Dendritic cell treated with granulocyte-macrophage colony-stimulating factor and Interleukin-4, amounts not matched to agents 40 ng/mL and 50 ng/mL, for 4 days (primary cell): ENCODE measurements at regions of chr7 and their contacts with region 1.

Region 1: GRCh38 chr7:139645572-139646523 is 122.4 kb downstream of the CLEC2L start:
- H3K4me3 Mint-ChIP-seq: no peak overlapping the region
- H3K27ac Mint-ChIP-seq: no peak overlapping the region
- H3K4me1 Mint-ChIP-seq: peaks cover 52% of the 10 kb centered on the region
- H3K27me3 Mint-ChIP-seq: peaks cover 3% of the 10 kb centered on the region

Region 2: DNA sequence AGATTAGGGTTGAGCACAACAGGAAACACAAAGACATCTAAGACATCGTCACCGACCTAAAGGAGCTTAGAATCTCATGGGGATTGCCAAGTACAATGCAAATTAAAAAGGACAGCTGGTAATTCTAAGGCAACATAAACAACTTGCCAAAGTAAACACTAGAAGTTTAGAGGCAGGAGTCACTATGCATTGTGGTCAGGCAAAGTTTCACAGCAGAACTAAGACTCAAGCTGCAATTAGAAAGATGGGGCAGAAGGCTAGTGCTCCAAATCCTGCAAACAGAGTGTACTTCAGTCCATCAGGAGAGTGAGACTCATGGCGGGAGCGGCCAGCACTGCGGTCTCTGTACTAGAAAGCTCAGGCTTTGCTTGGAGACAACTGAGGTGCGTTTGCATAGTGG is 79.2 kb after region 1 on chr7:
- intact Hi-C with region 1: loop called (anchors 10 kb)
- H3K4me3 Mint-ChIP-seq: no peak overlapping the region
- H3K27ac Mint-ChIP-seq: no peak overlapping the region
- H3K4me1 Mint-ChIP-seq: peaks cover 34% of the 10 kb centered on the region
- H3K27me3 Mint-ChIP-seq: no peaks in the 10 kb centered on the region

Region 3: GRCh38 chr7:139829025-139829774 is 183.4 kb after region 1 on chr7 and contains the start of gene TBXAS1:
- intact Hi-C with region 1: loop called (anchors 2 kb)
- H3K4me3 Mint-ChIP-seq: peak within 1 kb of the TSS; percentile 87
- H3K27ac Mint-ChIP-seq: peak within 1 kb of the TSS; percentile 95
- H3K4me1 Mint-ChIP-seq: peaks cover 52% of the 10 kb centered on the region
- H3K27me3 Mint-ChIP-seq: peaks cover 8% of the 10 kb centered on the region

Region 4: DNA sequence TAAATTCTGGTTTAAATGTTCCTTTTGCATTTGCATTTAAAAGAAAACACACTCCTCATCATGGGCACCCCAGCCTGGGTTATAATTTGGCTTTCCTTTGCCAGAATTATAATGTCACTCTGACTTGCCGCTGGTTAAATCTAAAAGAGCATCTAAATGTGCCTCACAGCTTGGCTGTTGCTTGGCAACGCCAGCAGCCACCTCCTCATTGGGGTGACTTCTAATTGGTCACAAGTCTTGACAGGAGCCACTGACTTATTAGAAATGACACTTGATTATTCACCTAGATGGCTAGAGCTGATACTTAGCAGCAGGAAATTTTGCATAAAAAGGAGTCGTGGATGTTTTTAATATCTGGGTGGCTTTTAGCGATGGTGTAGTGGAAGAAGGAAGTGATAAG is 297.6 kb after region 1 on chr7:
- intact Hi-C with region 1: loop called (anchors 10 kb)
- H3K4me3 Mint-ChIP-seq: no peak overlapping the region
- H3K27ac Mint-ChIP-seq: no peak overlapping the region
- H3K4me1 Mint-ChIP-seq: peaks cover 36% of the 10 kb centered on the region
- H3K27me3 Mint-ChIP-seq: no peaks in the 10 kb centered on the region